ENCODE measurements at regions of chr4 and their contacts with region 1.

Region 1: GRCh38 chr4:173334085-173334772 is at the start of gene HMGB2:
- DNase-seq: peak; percentile 100
- H3K4me3 ChIP-seq: peak within 1 kb of the TSS; percentile 99
- H3K27ac ChIP-seq: peak within 1 kb of the TSS; percentile 92
- H3K4me1 ChIP-seq: peaks cover 49% of the 10 kb centered on the region
- CTCF ChIP-seq: no peak
- total RNA-seq, gene HMGB2: 697 and 1,101 TPM in 2 replicates

Region 2: DNA sequence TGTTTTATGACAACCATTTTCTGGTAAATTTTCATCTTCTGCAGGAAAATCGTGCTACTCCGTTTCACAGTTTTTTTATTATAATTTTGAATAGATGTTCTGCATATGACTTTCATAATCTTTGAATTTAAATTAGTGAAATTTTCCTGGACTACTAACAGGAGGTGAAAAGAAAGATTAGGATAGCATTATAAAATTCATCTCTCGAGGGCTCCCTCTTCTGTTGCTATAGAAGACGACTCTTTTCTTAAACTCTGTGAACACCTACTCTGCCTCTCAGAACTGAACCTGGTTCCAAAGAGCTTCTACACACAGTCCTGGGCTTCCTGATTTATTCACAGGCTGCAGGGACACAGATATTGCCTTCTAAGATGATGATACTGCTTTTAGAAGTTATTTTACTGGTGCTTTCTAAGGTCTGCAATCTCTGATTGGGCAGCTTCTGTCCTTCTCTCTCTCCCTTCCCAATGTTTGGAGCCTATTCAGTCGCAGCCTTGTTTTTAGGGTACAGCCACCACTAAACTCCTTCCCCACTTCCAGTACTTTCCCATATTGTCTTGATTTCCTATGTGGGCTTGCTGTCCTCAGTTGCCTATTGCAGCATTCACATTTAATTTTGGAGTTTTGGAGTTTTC is 26.5 kb after region 1 on chr4:
- CTCF ChIA-PET with region 1: no interaction called
- POLR2A ChIA-PET with region 1: interaction called, 336 read pairs
- intact Hi-C with region 1: no loop called
- DNase-seq: peak; percentile 24
- H3K4me3 ChIP-seq: no peak overlapping the region
- H3K27ac ChIP-seq: no peak overlapping the region
- H3K4me1 ChIP-seq: peaks cover 22% of the 10 kb centered on the region
- CTCF ChIP-seq: peak; percentile 75

Region 3: DNA sequence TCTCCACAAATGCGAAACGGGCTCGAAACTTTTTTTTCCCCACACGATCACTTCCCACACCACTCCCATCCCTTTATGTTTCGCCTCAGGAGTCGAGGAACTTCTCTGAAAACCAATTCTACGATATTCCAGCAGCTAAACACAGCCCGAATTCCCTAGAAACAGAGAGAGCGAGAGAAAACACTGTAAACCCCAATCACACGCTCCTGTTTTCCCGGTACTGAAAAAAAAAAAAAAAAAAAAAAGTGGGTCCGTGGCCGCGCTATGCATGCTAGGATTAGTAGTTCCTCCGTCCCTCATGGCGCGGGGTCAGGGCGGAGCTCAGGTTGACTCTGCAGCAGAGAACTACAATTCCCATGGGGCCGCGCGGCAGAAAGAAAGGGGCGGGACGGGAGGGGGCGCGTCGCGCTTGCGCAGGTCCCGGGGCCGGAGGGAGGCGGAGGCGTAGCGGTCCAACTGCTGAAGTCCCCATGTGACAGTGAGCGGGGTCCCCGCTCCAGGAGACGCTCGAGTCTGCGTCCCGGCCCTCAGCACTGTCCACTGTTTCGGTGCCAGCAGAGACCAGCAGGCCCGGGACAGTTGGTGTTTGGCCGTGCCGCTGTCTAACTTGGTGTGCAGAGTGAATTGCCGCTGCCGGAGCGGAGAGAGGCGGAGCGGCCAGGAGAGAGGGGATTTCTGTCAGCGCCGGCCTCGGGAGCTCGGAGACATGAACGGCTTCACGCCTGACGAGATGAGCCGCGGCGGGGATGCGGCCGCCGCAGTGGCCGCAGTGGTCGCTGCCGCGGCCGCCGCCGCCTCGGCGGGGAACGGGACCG is 36.5 kb after region 1 on chr4 and contains the start of gene SAP30:
- CTCF ChIA-PET with region 1: interaction called, 6 read pairs
- POLR2A ChIA-PET with region 1: interaction called, 336 read pairs
- intact Hi-C with region 1: loop called (anchors 1 kb)
- DNase-seq: peak; percentile 98
- H3K4me3 ChIP-seq: peak within 1 kb of the TSS; percentile 83
- H3K27ac ChIP-seq: peak within 1 kb of the TSS; percentile 91
- H3K4me1 ChIP-seq: peaks cover 39% of the 10 kb centered on the region
- CTCF ChIP-seq: no peak
- total RNA-seq, gene SAP30: 63.5 and 86.2 TPM in 2 replicates

Region 4: GRCh38 chr4:173505924-173506518 is 171.8 kb after region 1 on chr4:
- CTCF ChIA-PET with region 1: no interaction called
- POLR2A ChIA-PET with region 1: no interaction called
- intact Hi-C with region 1: no loop called
- DNase-seq: peak; percentile 34
- H3K4me3 ChIP-seq: no peak overlapping the region
- H3K27ac ChIP-seq: no peak overlapping the region
- H3K4me1 ChIP-seq: no peaks in the 10 kb centered on the region
- CTCF ChIP-seq: peak; percentile 87

Measured in OCI-LY7 (cell line).